Dendritic cell treated with granulocyte-macrophage colony-stimulating factor and Interleukin-4, amounts not matched to agents 40 ng/mL and 50 ng/mL, for 4 days (primary cell): ENCODE measurements at regions of chr7 and their contacts with region 1.

Region 1: DNA sequence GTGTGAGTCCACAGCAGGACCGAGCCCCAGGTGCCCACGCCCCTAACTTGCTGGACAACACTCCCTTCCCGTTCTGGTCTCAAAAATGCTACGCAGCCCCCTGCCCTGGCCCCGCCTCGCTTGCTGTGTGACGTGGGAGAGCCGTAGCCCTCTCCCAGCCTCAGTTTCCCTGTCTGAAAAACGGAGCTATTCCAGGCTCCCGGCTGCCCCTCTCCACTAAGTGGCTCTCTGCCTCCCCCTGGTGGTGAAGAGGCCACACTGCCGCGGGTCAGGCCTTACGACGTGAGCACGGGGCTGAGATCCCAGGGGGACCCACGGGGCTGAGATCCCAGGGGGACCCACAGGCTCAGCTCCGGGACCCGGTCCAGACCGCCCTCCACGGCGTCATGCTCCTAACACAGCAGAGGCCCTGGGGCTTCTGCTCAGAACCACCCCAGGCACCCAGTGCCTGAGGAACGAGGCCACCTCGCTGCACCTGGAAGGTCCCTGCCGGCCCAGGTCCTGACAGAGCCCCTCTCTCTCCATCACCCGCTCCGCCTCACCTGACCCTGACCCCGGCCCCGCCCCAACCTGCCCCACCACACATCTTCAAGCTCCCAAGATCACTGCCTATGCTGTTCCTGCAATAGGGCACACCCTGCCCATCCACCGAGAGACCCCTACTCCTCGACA is 26.7 kb downstream of the MICALL2 start:
- H3K4me3 Mint-ChIP-seq: no peak overlapping the region
- H3K27ac Mint-ChIP-seq: peak overlapping the region; percentile 37
- H3K4me1 Mint-ChIP-seq: peaks cover 10% of the 10 kb centered on the region
- H3K27me3 Mint-ChIP-seq: peaks cover 26% of the 10 kb centered on the region

Region 2: GRCh38 chr7:1193593-1194424 is 238.7 kb before region 1 on chr7:
- intact Hi-C with region 1: loop called (anchors 10 kb)
- H3K4me3 Mint-ChIP-seq: no peak overlapping the region
- H3K27ac Mint-ChIP-seq: no peak overlapping the region
- H3K4me1 Mint-ChIP-seq: peaks cover 13% of the 10 kb centered on the region
- H3K27me3 Mint-ChIP-seq: peaks cover 29% of the 10 kb centered on the region

Region 3: DNA sequence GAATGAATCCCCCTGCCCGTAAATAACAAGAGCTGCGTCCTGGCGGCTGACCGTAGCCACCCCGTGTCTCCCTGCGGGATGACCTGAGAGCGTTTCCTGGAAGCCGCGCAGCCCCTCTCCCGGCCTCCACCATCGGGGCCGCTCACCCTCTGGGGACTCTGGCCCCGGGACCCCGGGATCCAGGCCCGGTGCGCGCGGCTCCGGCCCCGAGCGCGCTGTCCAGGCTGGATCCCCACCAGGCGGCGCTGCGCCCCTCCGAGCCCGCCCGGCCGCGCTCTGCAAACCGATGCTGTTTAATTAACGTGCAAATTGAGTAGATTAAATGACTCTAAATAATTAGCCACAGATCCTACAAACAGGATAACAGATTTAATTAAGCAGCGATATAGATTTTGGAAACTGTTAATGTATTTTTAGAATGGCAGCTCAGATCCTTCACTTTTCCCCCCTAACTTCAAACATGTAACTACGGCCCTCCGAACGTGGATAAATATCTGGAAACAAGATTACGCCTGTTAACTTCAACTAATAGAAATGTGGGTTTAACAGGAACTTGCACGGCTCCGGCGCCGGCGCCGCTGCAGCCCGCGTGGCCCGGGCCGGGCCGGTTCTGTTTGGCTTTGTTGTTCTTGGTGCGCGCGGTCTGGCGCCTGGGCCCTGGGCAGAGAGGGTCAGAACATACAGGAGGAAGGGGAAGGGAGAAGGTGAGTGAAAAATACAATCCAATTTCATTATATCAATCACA is 206.9 kb before region 1 on chr7:
- intact Hi-C with region 1: loop called (anchors 5 kb)
- H3K4me3 Mint-ChIP-seq: no peak overlapping the region
- H3K27ac Mint-ChIP-seq: no peak overlapping the region
- H3K4me1 Mint-ChIP-seq: peaks cover 21% of the 10 kb centered on the region
- H3K27me3 Mint-ChIP-seq: peaks cover 84% of the 10 kb centered on the region

Region 4: GRCh38 chr7:1473864-1474512 is 41.4 kb after region 1 on chr7:
- intact Hi-C with region 1: loop called (anchors 5 kb)
- H3K4me3 Mint-ChIP-seq: no peak overlapping the region
- H3K27ac Mint-ChIP-seq: no peak overlapping the region
- H3K4me1 Mint-ChIP-seq: peaks cover 5% of the 10 kb centered on the region
- H3K27me3 Mint-ChIP-seq: no peaks in the 10 kb centered on the region

Region 5: DNA sequence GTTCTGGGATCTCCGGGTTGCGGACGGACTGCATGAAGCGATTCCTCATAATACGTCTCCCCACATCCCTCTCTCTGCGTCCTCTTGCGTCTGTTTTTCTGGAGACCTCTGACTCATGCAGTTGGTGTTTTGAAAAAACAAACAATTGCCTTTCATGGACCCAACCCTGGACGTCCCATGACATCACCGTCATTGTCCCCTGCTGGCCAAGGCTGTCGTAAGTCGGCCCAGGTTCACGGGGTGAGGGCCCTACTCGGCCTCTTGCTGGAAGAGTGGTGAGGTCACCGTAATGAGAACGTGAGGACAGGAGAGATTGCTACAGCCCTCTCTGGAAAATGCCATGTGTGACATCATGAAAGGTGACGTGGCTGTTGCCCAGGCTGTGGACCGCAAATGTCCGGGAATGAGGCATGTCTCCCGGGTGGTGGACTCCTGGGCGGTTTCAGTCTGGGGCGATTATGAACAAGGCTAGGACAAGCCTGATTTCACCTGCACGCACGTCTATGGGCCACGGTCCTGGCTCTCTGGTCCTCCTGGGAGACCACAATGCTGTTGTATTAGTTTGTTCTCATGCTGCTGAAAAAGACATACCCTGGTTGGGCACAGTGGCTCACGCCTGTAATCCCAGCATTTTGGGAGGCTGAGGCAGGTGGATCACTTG is 88.2 kb after region 1 on chr7:
- intact Hi-C with region 1: no loop called
- H3K4me3 Mint-ChIP-seq: no peak overlapping the region
- H3K27ac Mint-ChIP-seq: peak overlapping the region; percentile 17
- H3K4me1 Mint-ChIP-seq: peaks cover 14% of the 10 kb centered on the region
- H3K27me3 Mint-ChIP-seq: peaks cover 15% of the 10 kb centered on the region